ENCODE measurements at regions of chr11 and their contacts with region 1.

Region 1: GRCh38 chr11:96464700-96465307 is 75.0 kb downstream of the JRKL start:
- DNase-seq: peak; percentile 90
- ATAC-seq: peak; percentile 89
- H3K4me3 ChIP-seq: peak overlapping the region; percentile 57
- H3K27ac ChIP-seq: no peak overlapping the region
- H3K4me1 ChIP-seq: peaks cover 12% of the 10 kb centered on the region; the same call in 1 of the 2 replicates
- H3K27me3 ChIP-seq: peaks cover 26% of the 10 kb centered on the region
- CTCF ChIP-seq: peak; percentile 94

Region 2: GRCh38 chr11:94525546-94526324 is 1939.1 kb before region 1 on chr11:
- CTCF ChIA-PET with region 1: no interaction called
- POLR2A ChIA-PET with region 1: no interaction called
- intact Hi-C with region 1: no loop called
- DNase-seq: peak; percentile 48
- ATAC-seq: no peak
- H3K4me3 ChIP-seq: no peak overlapping the region
- H3K27ac ChIP-seq: no peak overlapping the region
- H3K4me1 ChIP-seq: no peaks in the 10 kb centered on the region
- H3K27me3 ChIP-seq: no peaks in the 10 kb centered on the region
- CTCF ChIP-seq: no peak

Region 3: GRCh38 chr11:96524475-96524874 is 59.7 kb after region 1 on chr11:
- CTCF ChIA-PET with region 1: interaction called, 13 read pairs
- POLR2A ChIA-PET with region 1: no interaction called
- intact Hi-C with region 1: no loop called
- DNase-seq: no peak
- ATAC-seq: no peak
- H3K4me3 ChIP-seq: peak overlapping the region; percentile 42
- H3K27ac ChIP-seq: no peak overlapping the region
- H3K4me1 ChIP-seq: peaks cover 4% of the 10 kb centered on the region; the same call in 1 of the 2 replicates
- H3K27me3 ChIP-seq: peaks cover 15% of the 10 kb centered on the region
- CTCF ChIP-seq: peak; percentile 51; the same call in 1 of the 2 replicates

Region 4: DNA sequence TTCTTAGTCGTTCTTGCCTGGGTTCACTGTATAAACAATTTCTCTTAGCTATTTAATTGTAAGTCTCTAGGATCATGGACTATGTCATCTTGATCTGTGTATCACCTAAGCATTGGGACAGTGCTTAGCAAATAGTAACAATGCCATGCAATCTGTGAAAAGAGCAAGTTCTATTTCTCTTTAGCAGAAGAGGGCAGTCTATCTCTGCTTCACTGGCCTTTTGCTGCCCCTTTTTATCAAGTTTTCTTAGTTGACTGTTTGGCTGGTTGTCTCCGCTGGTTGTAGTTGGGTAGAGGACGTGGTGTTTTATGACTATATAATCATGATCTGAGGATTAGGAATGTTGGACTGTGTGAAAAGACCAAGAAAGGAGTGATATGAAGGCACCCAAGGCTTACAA is 240.0 kb after region 1 on chr11:
- CTCF ChIA-PET with region 1: no interaction called
- POLR2A ChIA-PET with region 1: no interaction called
- intact Hi-C with region 1: loop called (anchors 10 kb)
- DNase-seq: peak; percentile 22
- ATAC-seq: peak; percentile 38; the same call in 1 of the 2 replicates
- H3K4me3 ChIP-seq: no peak overlapping the region
- H3K27ac ChIP-seq: no peak overlapping the region
- H3K4me1 ChIP-seq: no peaks in the 10 kb centered on the region
- H3K27me3 ChIP-seq: peaks cover 39% of the 10 kb centered on the region; the same call in 1 of the 2 replicates
- CTCF ChIP-seq: 0 out of 2 replicates have a peak, but pooled peaks have one; percentile 29

Region 5: DNA sequence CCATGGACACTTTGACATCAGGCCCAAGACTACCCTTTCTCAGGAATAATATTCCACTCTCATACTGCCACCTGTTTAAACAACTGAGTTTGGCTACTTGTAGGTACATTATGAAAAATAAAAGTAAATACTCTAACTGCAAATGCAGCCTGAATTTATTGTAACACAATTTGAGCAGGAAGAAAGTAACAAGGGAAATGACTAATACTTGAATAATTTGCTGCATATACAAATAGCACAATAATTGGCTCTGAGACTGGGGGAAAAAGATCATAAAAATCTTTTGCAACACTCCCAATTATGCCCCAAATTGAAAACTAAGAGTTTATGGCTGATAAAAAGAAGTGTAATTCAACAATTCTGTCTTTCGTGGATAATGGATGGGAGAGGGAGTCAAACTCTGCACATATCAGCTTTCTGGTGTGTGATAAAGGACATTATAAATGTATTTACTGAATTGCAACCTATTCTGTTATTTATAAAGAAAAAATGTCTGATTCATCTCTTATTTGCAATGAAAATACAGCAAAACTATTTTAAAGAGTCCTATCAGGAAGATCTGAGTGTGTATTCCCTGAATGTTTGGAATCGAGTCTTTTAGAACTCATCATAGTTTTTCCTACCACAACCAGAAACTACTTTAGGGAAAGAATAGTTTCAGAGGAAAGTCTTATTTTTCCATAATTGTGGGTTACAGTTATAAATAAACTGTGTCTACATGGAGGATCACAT is 284.0 kb after region 1 on chr11:
- CTCF ChIA-PET with region 1: no interaction called
- POLR2A ChIA-PET with region 1: no interaction called
- intact Hi-C with region 1: loop called (anchors 2 kb)
- DNase-seq: peak; percentile 88
- ATAC-seq: peak; percentile 90
- H3K4me3 ChIP-seq: peak overlapping the region; percentile 52
- H3K27ac ChIP-seq: peak overlapping the region; percentile 76
- H3K4me1 ChIP-seq: peaks cover 27% of the 10 kb centered on the region
- H3K27me3 ChIP-seq: no peaks in the 10 kb centered on the region
- CTCF ChIP-seq: no peak; the same call in 1 of the 2 replicates

Region 6: GRCh38 chr11:96794152-96794551 is 329.3 kb after region 1 on chr11:
- CTCF ChIA-PET with region 1: interaction called, 7 read pairs
- POLR2A ChIA-PET with region 1: no interaction called
- intact Hi-C with region 1: loop called (anchors 1 kb)
- DNase-seq: peak; percentile 33
- ATAC-seq: peak; percentile 70
- H3K4me3 ChIP-seq: no peak overlapping the region
- H3K27ac ChIP-seq: no peak overlapping the region
- H3K4me1 ChIP-seq: no peaks in the 10 kb centered on the region
- H3K27me3 ChIP-seq: peaks cover 20% of the 10 kb centered on the region
- CTCF ChIP-seq: peak; percentile 47; the same call in 1 of the 2 replicates

Region 7: GRCh38 chr11:96905143-96905542 is 440.3 kb after region 1 on chr11:
- CTCF ChIA-PET with region 1: interaction called, 4 read pairs
- POLR2A ChIA-PET with region 1: no interaction called
- intact Hi-C with region 1: loop called (anchors 10 kb)
- DNase-seq: no peak
- ATAC-seq: no peak
- H3K4me3 ChIP-seq: no peak overlapping the region
- H3K27ac ChIP-seq: no peak overlapping the region
- H3K4me1 ChIP-seq: no peaks in the 10 kb centered on the region
- H3K27me3 ChIP-seq: 0 out of 2 replicates have a peak, but pooled peaks cover 10% of the 10 kb centered on the region
- CTCF ChIP-seq: no peak

Region 8: GRCh38 chr11:97140885-97141494 is 676.2 kb after region 1 on chr11:
- CTCF ChIA-PET with region 1: interaction called, 32 read pairs
- POLR2A ChIA-PET with region 1: no interaction called
- intact Hi-C with region 1: no loop called
- DNase-seq: peak; percentile 43
- ATAC-seq: no peak; the same call in 1 of the 2 replicates
- H3K4me3 ChIP-seq: no peak overlapping the region
- H3K27ac ChIP-seq: no peak overlapping the region
- H3K4me1 ChIP-seq: no peaks in the 10 kb centered on the region
- H3K27me3 ChIP-seq: no peaks in the 10 kb centered on the region
- CTCF ChIP-seq: peak; percentile 81